Left cardiac atrium (tissue), 4 donors: ENCODE measurements at regions of chr5 and their contacts with region 1.

Region 1: DNA sequence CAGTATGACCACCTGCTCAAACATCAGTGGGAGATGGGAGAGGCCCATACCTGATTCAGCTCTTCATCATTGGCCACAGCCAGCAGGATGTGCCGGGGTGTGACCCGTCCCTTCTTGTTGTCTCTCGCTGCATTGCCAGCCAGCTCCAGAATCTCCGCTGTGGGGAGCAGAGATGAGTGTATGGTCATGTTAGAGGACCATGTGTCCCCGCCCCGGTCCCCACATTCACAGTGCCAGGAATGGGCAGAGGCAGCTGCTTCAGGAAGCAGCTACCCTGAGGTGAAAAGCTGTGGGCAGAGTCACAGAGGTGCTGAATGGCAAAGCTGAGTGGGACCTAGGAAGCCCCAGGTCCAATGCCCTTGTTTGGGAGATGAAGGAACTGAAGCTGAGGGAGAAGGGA is 29.0 kb downstream of the MACROH2A1 start:
- DNase-seq: no peak
- ATAC-seq: no peak

Region 2: DNA sequence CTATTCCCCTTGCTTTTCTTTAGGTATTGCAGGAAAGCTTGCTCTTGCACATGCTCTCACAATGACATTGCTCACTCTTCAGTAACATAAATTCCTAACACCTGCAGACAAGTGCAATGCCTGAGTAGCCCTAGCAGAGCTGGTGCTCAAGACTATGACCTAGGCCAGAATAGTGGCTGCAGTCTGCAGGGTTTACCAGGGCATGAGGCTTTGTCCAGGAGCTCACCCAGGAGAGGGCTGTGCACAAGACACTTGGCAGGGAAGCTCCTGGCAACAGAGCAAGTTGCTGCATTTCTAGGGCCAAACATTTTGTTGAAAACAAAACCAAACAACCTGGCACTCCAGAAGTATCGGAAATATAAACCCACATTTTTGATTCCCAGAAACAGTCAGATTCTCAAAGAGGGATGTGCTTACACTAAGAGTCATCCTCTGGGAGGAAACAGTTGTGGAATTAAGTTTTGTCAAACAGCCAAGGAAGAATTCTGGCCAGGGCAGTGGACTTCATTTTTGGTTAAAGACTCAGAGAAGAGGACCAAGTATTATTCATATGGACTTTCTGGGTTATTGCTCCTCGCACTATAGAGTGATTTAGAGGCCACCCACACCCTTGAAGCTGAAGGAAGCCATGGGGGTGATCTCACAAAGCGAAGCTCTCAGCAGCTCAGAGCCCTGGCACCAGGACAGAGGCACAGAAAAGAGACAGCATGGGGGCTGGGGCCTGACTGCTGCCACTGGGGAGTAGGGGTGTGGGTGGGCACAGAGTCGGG is 15.8 kb before region 1 on chr5:
- intact Hi-C with region 1: loop called in 1 of 2 experiments (anchors 2 kb)
- DNase-seq: no peak
- ATAC-seq: peak; percentile 20 to 60